WTC11 (cell line): ENCODE measurements at regions of chr4 and their contacts with region 1.

Region 1: DNA sequence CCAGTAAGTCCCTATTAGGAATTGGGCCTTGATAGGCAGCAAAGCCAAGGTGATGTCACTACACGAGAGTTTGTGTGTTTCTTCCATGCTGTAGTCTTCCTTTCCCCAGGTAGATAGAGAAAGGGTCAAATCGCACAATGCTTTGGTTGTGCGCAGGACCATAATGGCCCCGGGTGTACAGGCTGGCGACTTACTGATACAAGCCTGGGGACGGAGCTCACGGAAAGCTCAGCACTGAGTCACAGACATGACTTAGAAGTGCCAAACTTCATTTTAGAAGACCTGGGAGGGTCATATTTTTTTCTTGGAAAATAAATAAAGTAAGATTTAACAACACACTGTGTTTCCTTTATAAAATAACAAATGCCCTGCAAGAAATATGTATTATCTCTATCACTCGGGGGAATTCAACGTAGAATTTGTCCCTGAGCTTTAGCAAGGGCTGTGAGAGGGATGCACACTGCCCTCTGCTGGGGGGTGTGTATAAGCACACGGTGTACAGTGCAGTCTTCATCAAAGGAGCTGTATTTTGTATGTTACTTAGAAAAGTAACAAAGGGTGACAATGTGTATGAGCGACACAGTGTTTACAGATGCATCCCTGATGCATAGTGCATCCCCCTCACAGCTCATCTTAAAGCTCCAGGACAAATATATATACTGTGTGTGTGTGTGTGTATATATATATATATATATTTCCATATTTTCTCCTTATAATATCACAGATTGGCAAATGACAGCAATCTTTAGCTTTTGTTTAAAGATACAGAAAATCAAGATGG is 254.5 kb upstream of the VEGFC start:
- DNase-seq: peak; percentile 72
- ATAC-seq: peak; percentile 88
- H3K4me3 Mint-ChIP-seq: peak overlapping the region; percentile 20
- H3K27ac Mint-ChIP-seq: no peak overlapping the region
- H3K4me1 Mint-ChIP-seq: no peaks in the 10 kb centered on the region
- H3K27me3 Mint-ChIP-seq: no peaks in the 10 kb centered on the region
- CTCF ChIP-seq: peak; percentile 86

Region 2: GRCh38 chr4:176377780-176378179 is 669.5 kb before region 1 on chr4:
- CTCF ChIA-PET with region 1: interaction called, 19 read pairs
- POLR2A ChIA-PET with region 1: no interaction called
- DNase-seq: no peak
- ATAC-seq: peak; percentile 28; the same call in 1 of the 2 replicates
- H3K4me3 Mint-ChIP-seq: no peak overlapping the region
- H3K27ac Mint-ChIP-seq: no peak overlapping the region
- H3K4me1 Mint-ChIP-seq: no peaks in the 10 kb centered on the region
- H3K27me3 Mint-ChIP-seq: no peaks in the 10 kb centered on the region
- CTCF ChIP-seq: no peak

Region 3: DNA sequence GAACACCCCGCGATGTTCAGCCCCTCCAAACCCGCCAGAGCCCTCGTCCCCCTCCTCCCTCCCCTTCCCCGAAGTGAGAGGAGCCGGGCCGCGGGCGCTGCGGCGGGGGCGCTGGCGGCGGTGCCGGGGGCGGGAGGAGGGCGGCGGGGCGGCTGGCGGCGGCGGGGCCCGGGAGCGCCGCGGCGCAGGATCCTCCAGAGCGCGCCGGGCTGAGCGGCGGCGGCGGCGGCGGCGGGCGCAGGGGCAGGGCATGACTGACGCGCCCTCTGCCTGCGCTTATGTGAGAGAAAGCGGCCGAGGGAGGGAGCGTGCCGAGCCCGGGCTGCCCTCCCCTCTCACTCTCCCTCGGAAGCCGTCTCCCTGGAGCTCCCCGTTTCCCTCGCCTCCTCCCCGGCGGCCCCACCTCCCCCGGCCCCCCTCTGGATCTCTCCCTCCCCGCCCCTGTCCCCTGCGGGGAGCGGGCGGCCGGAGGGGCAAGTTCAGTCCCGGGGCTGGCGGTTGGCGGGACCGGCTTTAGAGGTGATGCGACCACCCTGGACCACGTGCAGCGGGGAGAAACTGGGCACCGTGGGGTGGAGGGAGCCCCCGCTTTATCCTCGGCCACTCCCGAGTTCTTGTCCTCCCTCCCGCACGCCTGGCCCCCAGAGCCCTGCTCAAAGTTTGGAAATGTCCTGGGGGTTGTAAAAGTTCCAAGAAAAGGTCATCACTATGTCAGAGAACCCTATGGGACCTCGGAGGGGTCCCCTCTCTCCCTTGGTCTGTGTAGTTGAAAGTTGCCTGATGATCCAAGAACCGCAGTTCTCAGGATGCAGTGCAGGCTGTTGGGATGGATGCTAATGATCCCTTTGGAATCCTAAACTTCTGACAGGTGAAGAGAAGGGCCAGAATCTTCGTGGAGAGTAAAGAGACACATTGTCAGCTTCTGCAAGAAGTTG is 254.3 kb before region 1 on chr4 and contains the start of gene VEGFC:
- CTCF ChIA-PET with region 1: interaction called, 13 read pairs
- POLR2A ChIA-PET with region 1: no interaction called
- DNase-seq: peak; percentile 70
- ATAC-seq: peak; percentile 90
- H3K4me3 Mint-ChIP-seq: peak within 1 kb of the TSS; percentile 84
- H3K27ac Mint-ChIP-seq: no peak within 1 kb of the TSS
- H3K4me1 Mint-ChIP-seq: peaks cover 9% of the 10 kb centered on the region; the same call in 1 of the 2 replicates
- H3K27me3 Mint-ChIP-seq: peaks cover 39% of the 10 kb centered on the region
- CTCF ChIP-seq: no peak
- total RNA-seq, gene VEGFC: 0.61 to 1.1 TPM (median 0.71 TPM) in 3 replicates

Region 4: GRCh38 chr4:176838611-176839433 is 208.4 kb before region 1 on chr4:
- CTCF ChIA-PET with region 1: no interaction called
- POLR2A ChIA-PET with region 1: no interaction called
- DNase-seq: no peak
- ATAC-seq: no peak
- H3K4me3 Mint-ChIP-seq: no peak overlapping the region
- H3K27ac Mint-ChIP-seq: no peak overlapping the region
- H3K4me1 Mint-ChIP-seq: peaks cover 10% of the 10 kb centered on the region
- H3K27me3 Mint-ChIP-seq: no peaks in the 10 kb centered on the region
- CTCF ChIP-seq: no peak

Region 5: GRCh38 chr4:176964116-176964691 is 83.1 kb before region 1 on chr4:
- CTCF ChIA-PET with region 1: interaction called, 37 read pairs
- POLR2A ChIA-PET with region 1: no interaction called
- DNase-seq: peak; percentile 42
- ATAC-seq: peak; percentile 75
- H3K4me3 Mint-ChIP-seq: no peak overlapping the region
- H3K27ac Mint-ChIP-seq: no peak overlapping the region
- H3K4me1 Mint-ChIP-seq: 0 out of 2 replicates have a peak, but pooled peaks cover 4% of the 10 kb centered on the region
- H3K27me3 Mint-ChIP-seq: no peaks in the 10 kb centered on the region
- CTCF ChIP-seq: no peak; the same call in 1 of the 2 replicates

Region 6: GRCh38 chr4:177033135-177033534 is 14.1 kb before region 1 on chr4:
- CTCF ChIA-PET with region 1: interaction called, 22 read pairs
- POLR2A ChIA-PET with region 1: no interaction called
- DNase-seq: no peak
- ATAC-seq: peak; percentile 97
- H3K4me3 Mint-ChIP-seq: no peak overlapping the region
- H3K27ac Mint-ChIP-seq: no peak overlapping the region
- H3K4me1 Mint-ChIP-seq: no peaks in the 10 kb centered on the region
- H3K27me3 Mint-ChIP-seq: no peaks in the 10 kb centered on the region
- CTCF ChIP-seq: no peak

Region 7: DNA sequence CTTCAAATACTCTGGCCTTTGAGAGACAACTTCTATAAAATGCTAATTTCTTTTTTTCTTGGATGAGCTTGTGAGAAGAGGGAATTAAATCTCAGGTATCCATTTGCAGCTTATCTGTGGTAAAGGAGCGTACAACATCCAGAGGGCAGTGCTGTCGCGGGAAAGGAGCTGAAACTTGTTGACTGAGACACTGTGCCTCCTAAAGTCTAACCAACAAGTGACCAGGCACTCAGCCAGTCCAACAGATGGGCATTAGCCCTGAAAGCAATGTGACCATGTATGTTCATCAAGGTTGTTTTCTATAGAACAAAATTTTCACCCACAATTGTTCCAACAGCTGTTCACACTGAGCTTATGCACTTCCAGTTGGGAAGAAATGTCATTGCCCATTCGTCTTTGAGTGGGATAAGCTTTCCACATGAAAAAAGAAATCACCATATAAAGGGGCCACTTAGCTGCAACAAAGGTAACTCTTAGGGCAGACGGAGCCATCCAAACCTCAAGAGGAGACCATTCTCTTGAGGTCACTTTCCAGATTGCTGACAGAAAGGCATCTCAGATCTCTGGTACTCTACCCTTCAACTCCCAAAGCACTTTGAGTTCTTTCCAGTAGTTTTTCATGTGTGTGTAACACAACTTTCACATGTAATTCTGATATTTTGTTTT is 17.6 kb after region 1 on chr4:
- CTCF ChIA-PET with region 1: interaction called, 22 read pairs
- POLR2A ChIA-PET with region 1: no interaction called
- DNase-seq: peak; percentile 16
- ATAC-seq: peak; percentile 87
- H3K4me3 Mint-ChIP-seq: no peak overlapping the region
- H3K27ac Mint-ChIP-seq: no peak overlapping the region
- H3K4me1 Mint-ChIP-seq: peaks cover 8% of the 10 kb centered on the region
- H3K27me3 Mint-ChIP-seq: no peaks in the 10 kb centered on the region
- CTCF ChIP-seq: no peak

Region 8: GRCh38 chr4:177079327-177079726 is 32.1 kb after region 1 on chr4:
- CTCF ChIA-PET with region 1: interaction called, 11 read pairs
- POLR2A ChIA-PET with region 1: no interaction called
- DNase-seq: no peak
- ATAC-seq: peak; percentile 26; the same call in 1 of the 2 replicates
- H3K4me3 Mint-ChIP-seq: no peak overlapping the region
- H3K27ac Mint-ChIP-seq: no peak overlapping the region
- H3K4me1 Mint-ChIP-seq: peaks cover 7% of the 10 kb centered on the region
- H3K27me3 Mint-ChIP-seq: no peaks in the 10 kb centered on the region
- CTCF ChIP-seq: no peak

Region 9: GRCh38 chr4:177118596-177118995 is 71.3 kb after region 1 on chr4:
- CTCF ChIA-PET with region 1: no interaction called
- POLR2A ChIA-PET with region 1: no interaction called
- DNase-seq: no peak
- ATAC-seq: no peak
- H3K4me3 Mint-ChIP-seq: no peak overlapping the region
- H3K27ac Mint-ChIP-seq: no peak overlapping the region
- H3K4me1 Mint-ChIP-seq: peaks cover 12% of the 10 kb centered on the region
- H3K27me3 Mint-ChIP-seq: no peaks in the 10 kb centered on the region
- CTCF ChIP-seq: no peak

Region 10: GRCh38 chr4:177256950-177257349 is 209.7 kb after region 1 on chr4:
- CTCF ChIA-PET with region 1: no interaction called
- POLR2A ChIA-PET with region 1: no interaction called
- DNase-seq: no peak
- ATAC-seq: no peak
- H3K4me3 Mint-ChIP-seq: no peak overlapping the region
- H3K27ac Mint-ChIP-seq: no peak overlapping the region
- H3K4me1 Mint-ChIP-seq: peaks cover 12% of the 10 kb centered on the region
- H3K27me3 Mint-ChIP-seq: no peaks in the 10 kb centered on the region; the same call in 1 of the 2 replicates
- CTCF ChIP-seq: no peak